ENCODE measurements at regions of chr1 and their contacts with region 1.

Region 1: GRCh38 chr1:216119602-216120001 is 303.6 kb downstream of the USH2A start:
- DNase-seq: peak; percentile 62
- H3K4me3 Mint-ChIP-seq: no peak overlapping the region
- H3K27ac Mint-ChIP-seq: no peak overlapping the region
- H3K4me1 Mint-ChIP-seq: no peaks in the 10 kb centered on the region
- H3K27me3 Mint-ChIP-seq: peaks cover 82% of the 10 kb centered on the region
- CTCF ChIP-seq: peak; percentile 80

Region 2: DNA sequence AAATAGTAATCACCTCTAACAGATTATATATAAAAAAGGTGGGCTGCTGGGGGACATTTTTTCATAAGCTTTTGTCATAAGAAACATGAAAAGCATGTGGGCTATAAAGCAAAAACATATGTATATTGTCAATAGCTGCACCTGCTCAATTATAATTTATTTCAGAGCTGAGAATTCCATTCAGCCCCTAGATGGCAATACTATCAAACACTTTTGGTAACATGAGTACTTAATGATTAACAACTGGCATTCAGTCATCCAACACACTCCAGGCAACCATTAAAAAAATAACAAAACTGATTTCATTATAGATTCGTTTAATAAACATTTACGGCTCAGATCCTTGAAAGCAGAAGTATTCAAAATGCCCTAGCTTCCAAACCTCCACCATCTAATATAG is 437.4 kb before region 1 on chr1:
- CTCF ChIA-PET with region 1: interaction called, 9 read pairs
- POLR2A ChIA-PET with region 1: no interaction called
- intact Hi-C with region 1: loop called (anchors 1 kb)
- DNase-seq: peak; percentile 33
- H3K4me3 Mint-ChIP-seq: no peak overlapping the region
- H3K27ac Mint-ChIP-seq: no peak overlapping the region
- H3K4me1 Mint-ChIP-seq: no peaks in the 10 kb centered on the region
- H3K27me3 Mint-ChIP-seq: peaks cover 47% of the 10 kb centered on the region
- CTCF ChIP-seq: peak; percentile 44

Region 3: GRCh38 chr1:215888159-215888558 is 231.4 kb before region 1 on chr1:
- CTCF ChIA-PET with region 1: interaction called, 4 read pairs
- POLR2A ChIA-PET with region 1: no interaction called
- intact Hi-C with region 1: loop called (anchors 5 kb)
- DNase-seq: peak; percentile 43
- H3K4me3 Mint-ChIP-seq: no peak overlapping the region
- H3K27ac Mint-ChIP-seq: no peak overlapping the region
- H3K4me1 Mint-ChIP-seq: no peaks in the 10 kb centered on the region
- H3K27me3 Mint-ChIP-seq: peaks cover 93% of the 10 kb centered on the region
- CTCF ChIP-seq: peak; percentile 26

Region 4: GRCh38 chr1:216034504-216034903 is 85.1 kb before region 1 on chr1:
- CTCF ChIA-PET with region 1: no interaction called
- POLR2A ChIA-PET with region 1: interaction called, 3 read pairs
- intact Hi-C with region 1: loop called (anchors 2 kb)
- DNase-seq: peak; percentile 66
- H3K4me3 Mint-ChIP-seq: no peak overlapping the region
- H3K27ac Mint-ChIP-seq: no peak overlapping the region
- H3K4me1 Mint-ChIP-seq: no peaks in the 10 kb centered on the region
- H3K27me3 Mint-ChIP-seq: peaks cover 77% of the 10 kb centered on the region
- CTCF ChIP-seq: peak; percentile 50

Region 5: DNA sequence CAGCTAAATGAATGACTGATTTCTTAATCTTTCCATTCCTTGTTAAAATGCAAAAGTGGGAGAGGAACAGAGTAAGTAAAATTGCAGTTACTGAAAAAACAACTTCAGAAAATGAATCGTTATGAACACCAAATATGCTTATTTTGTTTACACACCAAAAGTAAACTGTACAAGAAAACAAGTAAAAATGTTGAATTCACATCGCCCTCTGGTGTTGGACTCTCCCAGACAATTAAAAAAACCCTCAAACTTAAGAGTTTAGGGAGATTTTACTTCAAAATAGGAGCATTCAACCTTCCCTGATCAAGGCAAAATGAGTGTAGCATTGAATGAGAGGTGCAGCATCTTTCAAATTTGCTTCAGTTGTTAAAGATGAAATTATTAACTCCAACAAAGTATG is 623.0 kb after region 1 on chr1:
- CTCF ChIA-PET with region 1: no interaction called
- POLR2A ChIA-PET with region 1: interaction called, 4 read pairs
- intact Hi-C with region 1: loop called (anchors 10 kb)
- DNase-seq: peak; percentile 34
- H3K4me3 Mint-ChIP-seq: no peak overlapping the region
- H3K27ac Mint-ChIP-seq: no peak overlapping the region
- H3K4me1 Mint-ChIP-seq: no peaks in the 10 kb centered on the region
- H3K27me3 Mint-ChIP-seq: peaks cover 59% of the 10 kb centered on the region
- CTCF ChIP-seq: peak; percentile 66

Measured in MCF 10A (cell line).